Activated T-helper 1 cell treated with anti-CD3 and anti-CD28 coated beads, Interleukin-12 subunit alpha, Interleukin-12 subunit beta, Interleukin-2, Interleukin-4 antibody, amounts not matched to agents 30 ng/mL and 10 ng/mL and 1 ng/mL, durations not matched to agents 14 hours and 24 hours and 36 hours (primary cell): ENCODE measurements at regions of chr9 and their contacts with region 1.

Region 1: DNA sequence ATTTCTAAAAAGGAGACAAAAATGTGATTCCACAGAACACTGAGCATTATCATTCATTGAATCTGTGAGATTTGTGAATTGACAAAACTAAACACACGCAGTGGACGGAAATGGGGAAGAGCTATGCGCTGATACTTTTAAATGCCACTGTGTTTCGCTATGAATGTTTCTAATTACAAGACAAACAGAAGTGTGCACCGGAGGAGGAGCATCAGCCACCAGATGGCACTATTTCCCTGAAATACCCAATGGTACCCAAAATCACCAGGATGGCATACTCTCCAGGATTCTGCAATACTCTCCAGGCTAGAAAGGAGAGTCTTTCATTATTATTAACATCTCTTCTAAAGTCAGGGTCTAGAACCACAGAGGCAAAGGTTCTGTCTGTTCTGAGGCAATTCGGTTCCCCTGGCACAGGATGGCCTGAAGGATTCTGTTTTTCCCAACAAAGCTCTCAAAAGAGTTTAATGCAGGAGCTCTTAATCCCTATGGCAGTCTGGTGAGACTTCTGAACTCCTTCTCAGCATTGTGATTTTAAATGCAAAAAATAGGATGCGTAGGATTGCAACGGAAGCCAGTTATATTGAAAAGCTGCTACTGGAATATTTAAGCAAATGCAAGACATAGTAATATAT is 13.8 kb upstream of the PUM3 start:
- DNase-seq: peak; percentile 39
- H3K4me3 Mint-ChIP-seq: no peak overlapping the region
- H3K27ac Mint-ChIP-seq: no peak overlapping the region
- H3K4me1 Mint-ChIP-seq: peaks cover 10% of the 10 kb centered on the region
- H3K27me3 Mint-ChIP-seq: peaks cover 19% of the 10 kb centered on the region

Region 2: DNA sequence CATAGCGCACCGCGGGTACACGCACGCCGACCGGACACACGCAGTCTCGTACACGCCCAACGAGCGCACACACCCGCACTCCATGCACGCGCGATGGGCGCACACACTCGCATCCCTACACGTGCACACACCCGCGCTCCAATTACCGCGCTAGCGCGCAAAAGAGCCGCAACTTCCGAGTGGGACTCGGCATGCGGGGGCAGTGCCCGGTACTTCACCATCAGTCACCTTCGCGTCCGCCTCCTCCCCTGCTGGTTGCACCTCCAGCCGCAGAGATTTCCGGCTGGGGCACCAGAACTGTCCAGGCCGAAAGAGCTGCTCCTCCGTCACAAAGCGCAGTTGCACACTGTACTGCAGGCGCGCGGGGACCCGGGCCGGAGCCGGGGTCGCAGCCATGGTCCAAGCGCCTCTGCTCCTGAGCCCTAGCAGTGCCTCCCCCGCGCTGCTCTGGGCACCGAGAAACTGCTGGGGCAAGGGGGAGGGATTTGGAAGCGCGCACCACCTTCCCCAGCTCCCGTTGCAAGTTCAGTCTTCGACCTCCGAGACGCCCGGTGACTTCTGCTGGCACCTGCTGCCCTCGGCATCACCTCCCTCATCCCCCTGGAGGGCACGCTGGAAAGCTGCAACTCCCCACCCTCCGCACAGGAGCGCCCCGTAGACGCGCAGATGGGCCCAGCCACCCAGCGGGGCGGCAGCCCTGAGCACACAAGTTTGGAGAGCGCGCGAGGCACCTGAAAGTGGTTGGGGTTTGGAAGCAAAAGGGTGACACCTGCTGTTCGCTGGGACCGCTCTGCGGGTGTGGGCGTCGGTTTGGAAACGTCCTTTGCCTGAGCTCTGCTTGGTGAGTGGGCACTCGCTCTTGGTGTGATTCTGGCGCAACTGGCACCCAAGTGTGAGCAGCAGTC is 323.6 kb after region 1 on chr9:
- intact Hi-C with region 1: loop called (anchors 1 kb)
- DNase-seq: peak; percentile 19
- H3K4me3 Mint-ChIP-seq: peak overlapping the region; percentile 64
- H3K27ac Mint-ChIP-seq: no peak overlapping the region
- H3K4me1 Mint-ChIP-seq: no peaks in the 10 kb centered on the region
- H3K27me3 Mint-ChIP-seq: peaks cover 29% of the 10 kb centered on the region

Region 3: DNA sequence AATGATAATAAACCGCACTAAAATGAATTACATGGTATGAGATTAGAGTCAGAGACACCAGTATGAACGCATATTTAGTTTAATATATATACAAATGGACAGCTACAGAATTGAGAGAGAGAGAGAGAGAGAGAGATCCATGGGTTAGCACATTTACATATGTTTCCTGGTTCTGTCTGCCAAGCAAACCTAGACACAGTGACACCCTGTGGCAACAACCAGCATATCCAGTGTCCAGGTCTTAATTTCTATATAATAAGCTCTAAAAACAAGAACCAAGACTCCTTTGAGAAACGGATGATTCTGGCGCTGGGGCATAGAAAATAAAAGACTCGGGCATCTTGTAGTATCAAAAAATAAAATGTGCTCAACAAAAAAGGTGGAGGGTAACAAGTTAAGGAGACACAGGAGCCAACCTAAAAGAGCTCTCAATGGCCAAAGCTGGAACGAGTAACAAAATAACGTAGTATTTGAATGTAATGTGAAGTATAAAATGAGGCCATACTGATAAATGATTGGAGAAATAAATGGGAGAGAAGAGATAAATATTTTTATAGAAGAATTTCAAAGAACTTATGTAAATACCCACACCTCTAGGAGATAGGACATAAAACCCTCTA is 583.6 kb after region 1 on chr9:
- intact Hi-C with region 1: loop called (anchors 2 kb)
- DNase-seq: peak; percentile 18
- H3K4me3 Mint-ChIP-seq: no peak overlapping the region
- H3K27ac Mint-ChIP-seq: no peak overlapping the region
- H3K4me1 Mint-ChIP-seq: no peaks in the 10 kb centered on the region
- H3K27me3 Mint-ChIP-seq: peaks cover 2% of the 10 kb centered on the region

Region 4: GRCh38 chr9:4375424-4376200 is 1517.9 kb after region 1 on chr9:
- intact Hi-C with region 1: loop called (anchors 2 kb)
- DNase-seq: no peak
- H3K4me3 Mint-ChIP-seq: no peak overlapping the region
- H3K27ac Mint-ChIP-seq: no peak overlapping the region
- H3K4me1 Mint-ChIP-seq: no peaks in the 10 kb centered on the region
- H3K27me3 Mint-ChIP-seq: peaks cover 7% of the 10 kb centered on the region